ENCODE measurements at regions of chr19 and their contacts with region 1.

Region 1: DNA sequence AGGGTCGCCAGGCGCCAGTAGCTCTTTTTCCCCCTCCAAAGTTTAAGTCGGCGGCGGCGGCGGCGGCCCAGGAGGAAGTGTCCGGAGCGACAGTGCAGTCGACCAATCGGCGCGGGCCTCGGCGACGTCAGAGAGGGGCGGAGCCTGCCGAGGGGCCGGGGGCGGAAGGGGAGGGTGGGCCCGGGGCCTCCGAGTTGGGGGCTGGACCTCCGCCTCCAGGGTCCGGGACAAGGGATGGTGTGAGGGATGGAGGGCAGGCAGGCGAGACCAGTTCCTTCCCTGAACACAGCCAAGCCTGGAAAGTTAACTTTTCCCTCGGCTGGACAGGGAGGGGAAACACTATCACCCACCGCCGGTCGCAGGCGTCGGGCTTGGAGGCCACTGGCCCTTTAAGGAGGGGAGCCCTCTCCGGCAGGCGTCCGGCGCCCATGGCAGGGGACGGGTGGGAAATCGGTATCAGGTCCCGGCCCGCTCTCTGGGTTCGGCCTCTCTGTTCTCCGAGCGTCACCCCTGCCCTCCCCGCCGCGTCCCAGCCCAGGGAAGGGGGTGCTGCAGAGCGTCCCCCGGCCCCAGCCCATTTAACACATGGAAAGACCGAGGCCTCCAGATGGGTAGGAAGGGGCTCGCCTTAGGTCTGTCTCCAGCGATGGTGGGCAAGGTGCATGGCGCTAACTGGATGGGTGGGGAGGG is at the start of gene PRKD2:
- DNase-seq: peak; percentile 92
- H3K4me3 Mint-ChIP-seq: peak within 1 kb of the TSS; percentile 97
- H3K27ac Mint-ChIP-seq: peak within 1 kb of the TSS; percentile 95
- H3K4me1 Mint-ChIP-seq: peaks cover 45% of the 10 kb centered on the region
- H3K27me3 Mint-ChIP-seq: no peaks in the 10 kb centered on the region
- total RNA-seq, gene PRKD2: 167 to 177 TPM

Region 2: GRCh38 chr19:46600384-46601317 is 116.5 kb before region 1 on chr19:
- CTCF ChIA-PET with region 1: interaction called, 4 read pairs
- POLR2A ChIA-PET with region 1: interaction called, 24 read pairs
- DNase-seq: peak; percentile 97
- H3K4me3 Mint-ChIP-seq: peak overlapping the region; percentile 100
- H3K27ac Mint-ChIP-seq: peak overlapping the region; percentile 100
- H3K4me1 Mint-ChIP-seq: peaks cover 38% of the 10 kb centered on the region
- H3K27me3 Mint-ChIP-seq: peaks cover 12% of the 10 kb centered on the region

Region 3: GRCh38 chr19:46614114-46614722 is 103.0 kb before region 1 on chr19:
- CTCF ChIA-PET with region 1: interaction called, 8 read pairs
- POLR2A ChIA-PET with region 1: interaction called, 17 read pairs
- DNase-seq: peak; percentile 81
- H3K4me3 Mint-ChIP-seq: no peak overlapping the region
- H3K27ac Mint-ChIP-seq: peak overlapping the region; percentile 66
- H3K4me1 Mint-ChIP-seq: peaks cover 74% of the 10 kb centered on the region
- H3K27me3 Mint-ChIP-seq: no peaks in the 10 kb centered on the region

Region 4: DNA sequence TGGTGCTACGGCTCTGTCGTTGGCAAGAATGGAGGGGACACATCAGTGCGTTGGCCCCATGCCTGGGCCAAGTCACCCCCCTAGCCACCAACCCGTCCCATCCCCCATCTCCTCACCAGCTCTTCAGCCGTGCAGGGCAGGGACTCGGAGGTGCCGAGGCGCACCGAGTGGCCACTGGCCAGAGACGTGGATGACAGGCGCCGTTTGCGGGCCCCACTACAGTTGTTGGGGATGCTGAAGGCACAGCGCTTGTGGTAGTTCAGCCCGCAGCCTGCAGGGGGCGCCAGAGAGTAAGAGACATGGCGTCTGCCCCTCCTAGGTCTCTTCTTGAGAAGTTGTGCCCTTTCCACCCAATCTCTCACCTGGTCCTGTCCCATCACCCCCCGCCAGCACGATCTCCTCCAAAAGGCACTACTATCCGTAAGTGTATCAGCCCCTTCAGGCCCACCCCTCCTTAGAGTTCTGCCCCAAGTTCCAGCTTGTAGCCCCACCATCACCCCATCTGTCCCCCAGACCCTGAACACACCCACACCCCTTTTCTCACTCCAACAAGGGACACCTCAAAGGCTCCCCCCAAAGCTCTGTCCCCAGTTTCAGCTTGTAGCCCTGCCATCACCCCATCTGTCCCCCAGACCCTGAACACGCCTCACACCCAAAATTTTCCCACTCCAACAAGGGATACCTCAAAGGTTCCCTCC is 12.7 kb before region 1 on chr19:
- CTCF ChIA-PET with region 1: interaction called, 50 read pairs
- POLR2A ChIA-PET with region 1: interaction called, 40 read pairs
- DNase-seq: peak; percentile 87
- H3K4me3 Mint-ChIP-seq: no peak overlapping the region
- H3K27ac Mint-ChIP-seq: peak overlapping the region; percentile 59
- H3K4me1 Mint-ChIP-seq: peaks cover 17% of the 10 kb centered on the region
- H3K27me3 Mint-ChIP-seq: no peaks in the 10 kb centered on the region

Region 5: DNA sequence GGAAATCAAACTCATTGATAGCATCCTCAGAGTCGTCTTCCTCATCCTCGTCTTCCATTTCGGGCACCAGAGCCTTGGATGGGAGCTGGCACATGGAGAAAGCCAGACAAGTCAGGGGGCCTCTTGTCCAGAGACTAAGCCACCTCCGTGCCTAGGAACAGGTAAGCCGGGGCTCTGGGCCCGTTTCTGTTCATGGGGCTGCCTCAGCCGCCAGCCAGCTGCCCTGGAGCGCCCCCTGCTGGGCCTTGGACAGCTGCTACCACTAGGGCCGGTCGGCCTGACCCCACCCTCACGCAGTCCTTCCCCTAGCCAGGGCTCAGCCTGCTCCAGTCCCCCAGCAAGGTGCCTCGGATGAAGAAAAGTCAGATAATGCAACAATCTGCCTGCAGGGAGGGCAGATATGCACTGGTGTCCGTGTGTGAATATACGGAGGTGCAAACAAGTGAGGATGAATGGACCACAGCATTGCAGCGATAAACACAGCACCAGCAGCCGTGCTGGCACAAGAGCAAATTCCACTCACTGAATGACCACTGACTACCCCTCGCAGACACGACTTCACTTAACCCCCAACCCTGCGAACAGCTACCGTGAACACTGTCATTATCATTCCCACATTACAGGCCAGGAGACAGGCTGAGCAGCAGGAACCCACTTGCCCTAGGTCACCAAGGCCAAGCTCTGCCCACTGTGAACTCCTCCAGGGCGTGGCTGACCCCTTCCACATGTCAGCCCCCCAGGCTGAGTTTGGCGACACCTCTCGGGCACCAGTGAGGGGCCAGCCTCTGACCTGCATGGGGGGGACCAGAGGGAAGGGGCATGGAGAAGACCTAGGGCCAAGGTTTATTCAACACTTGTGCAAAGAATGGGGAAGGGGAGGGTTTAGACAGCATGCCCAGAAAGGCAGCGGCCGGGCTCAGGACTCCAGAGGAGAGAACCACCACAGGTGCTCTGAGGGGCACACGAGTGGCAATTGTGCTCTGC is 11.8 kb after region 1 on chr19:
- CTCF ChIA-PET with region 1: interaction called, 14 read pairs
- POLR2A ChIA-PET with region 1: interaction called, 38 read pairs
- DNase-seq: peak; percentile 85
- H3K4me3 Mint-ChIP-seq: no peak overlapping the region
- H3K27ac Mint-ChIP-seq: no peak overlapping the region
- H3K4me1 Mint-ChIP-seq: peaks cover 31% of the 10 kb centered on the region
- H3K27me3 Mint-ChIP-seq: no peaks in the 10 kb centered on the region

Region 6: GRCh38 chr19:46746281-46747013 is 29.3 kb after region 1 on chr19 and contains the start of gene STRN4:
- CTCF ChIA-PET with region 1: interaction called, 5 read pairs
- POLR2A ChIA-PET with region 1: interaction called, 12 read pairs
- DNase-seq: peak; percentile 65
- H3K4me3 Mint-ChIP-seq: peak within 1 kb of the TSS; percentile 93
- H3K27ac Mint-ChIP-seq: peak within 1 kb of the TSS; percentile 80
- H3K4me1 Mint-ChIP-seq: peaks cover 53% of the 10 kb centered on the region
- H3K27me3 Mint-ChIP-seq: no peaks in the 10 kb centered on the region
- total RNA-seq, gene STRN4: 75.1 to 78.5 TPM